ENCODE measurements at regions of chr12 and their contacts with region 1.

Region 1: DNA sequence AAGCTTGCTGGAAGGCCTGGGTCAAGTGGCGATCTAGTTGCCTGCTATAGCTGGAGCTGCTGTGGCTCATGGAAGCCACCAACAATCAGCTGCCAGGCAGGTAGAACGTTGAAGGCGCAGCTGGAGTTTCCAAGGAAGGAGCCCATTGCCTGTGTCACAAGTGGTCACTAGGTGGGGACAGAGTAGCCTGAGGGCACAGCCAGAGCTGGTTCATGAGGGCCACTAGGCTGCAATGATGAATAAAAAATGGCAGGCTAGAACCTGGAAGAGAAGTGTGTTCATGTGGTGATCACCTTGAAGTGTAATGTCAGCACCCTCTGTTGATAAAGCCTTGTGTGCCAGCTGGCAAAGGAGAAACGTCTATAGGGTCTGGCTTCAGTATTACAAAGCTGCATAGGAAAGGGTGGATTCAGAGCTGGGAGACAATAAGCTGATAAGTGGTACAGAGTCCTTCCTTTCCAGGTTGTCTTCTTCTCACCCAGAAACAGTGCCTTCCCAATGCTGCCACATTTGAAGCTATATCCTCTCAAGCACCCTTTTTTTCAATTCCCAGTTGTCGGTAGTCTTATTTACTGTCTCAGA is 165.8 kb downstream of the EMP1 start:
- DNase-seq: peak; percentile 68
- ATAC-seq: peak; percentile 67
- H3K4me3 ChIP-seq: no peak overlapping the region
- H3K4me3 Mint-ChIP-seq: no peak overlapping the region
- H3K27ac ChIP-seq: no peak overlapping the region
- H3K27ac Mint-ChIP-seq: no peak overlapping the region
- H3K4me1 ChIP-seq: no peaks in the 10 kb centered on the region
- H3K4me1 Mint-ChIP-seq: no peaks in the 10 kb centered on the region
- H3K27me3 ChIP-seq: peaks cover 0 to 7% (median 0%) of the 10 kb centered on the region in 4 experiments
- H3K27me3 Mint-ChIP-seq: peaks cover 12% of the 10 kb centered on the region
- CTCF ChIP-seq: peak; percentile 90

Region 2: DNA sequence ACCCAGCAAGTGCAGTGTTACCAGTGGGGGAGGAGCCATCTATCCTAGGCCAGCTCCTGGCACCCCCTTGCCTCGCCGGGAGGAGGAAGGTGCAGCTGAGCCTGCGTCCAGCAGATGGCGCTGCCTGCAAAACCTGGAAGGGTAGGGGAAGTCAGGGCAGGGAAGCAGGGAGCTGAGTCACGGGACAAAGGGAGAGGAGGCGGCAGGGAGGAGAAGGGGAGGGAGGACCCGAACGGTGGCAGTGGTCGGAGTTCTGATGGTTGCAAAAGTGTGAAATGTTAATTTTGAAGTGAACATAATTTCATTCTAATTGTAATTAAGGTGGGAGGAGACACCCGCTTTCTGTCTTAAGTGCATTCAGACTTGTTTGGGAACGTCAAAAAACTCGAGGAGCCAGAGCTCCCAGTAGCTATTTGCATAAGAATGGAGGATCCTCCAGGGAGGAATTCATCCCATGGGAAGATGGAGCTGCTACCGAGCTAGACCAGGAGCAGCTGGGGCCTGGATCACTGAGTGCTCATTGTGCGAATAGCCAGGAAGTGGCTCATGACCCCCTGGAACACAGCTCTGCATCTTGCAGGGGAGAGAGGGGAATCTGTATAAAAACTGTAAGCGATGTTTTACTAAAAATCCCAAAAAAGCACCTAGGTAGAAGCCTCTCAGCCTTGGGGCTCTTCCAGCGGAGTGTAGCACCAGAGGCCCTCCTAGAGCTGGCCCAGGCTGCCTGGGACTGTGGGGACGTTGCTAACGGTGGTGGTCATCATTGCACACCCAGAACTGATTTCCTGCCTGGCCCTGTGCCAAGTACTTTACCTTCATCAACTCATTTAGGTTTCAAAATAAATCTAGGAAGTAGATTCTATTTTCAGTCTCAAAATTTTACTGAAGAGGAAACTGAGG is 106.3 kb before region 1 on chr12:
- CTCF ChIA-PET with region 1: interaction called, 12 read pairs
- POLR2A ChIA-PET with region 1: no interaction called
- intact Hi-C with region 1: no loop called
- DNase-seq: peak; percentile 75
- ATAC-seq: peak; percentile 96
- H3K4me3 ChIP-seq: no peak overlapping the region
- H3K4me3 Mint-ChIP-seq: peak overlapping the region; percentile 33
- H3K27ac ChIP-seq: no peak overlapping the region
- H3K27ac Mint-ChIP-seq: no peak overlapping the region
- H3K4me1 ChIP-seq: peaks cover 3 to 4% of the 10 kb centered on the region in 2 donors
- H3K4me1 Mint-ChIP-seq: peaks cover 4% of the 10 kb centered on the region
- H3K27me3 ChIP-seq: peaks cover 0 to 3% (median 0%) of the 10 kb centered on the region in 4 experiments
- H3K27me3 Mint-ChIP-seq: peaks cover 14% of the 10 kb centered on the region
- CTCF ChIP-seq: peak; percentile 96

Region 3: GRCh38 chr12:13316587-13317246 is 45.6 kb before region 1 on chr12:
- CTCF ChIA-PET with region 1: no interaction called
- POLR2A ChIA-PET with region 1: no interaction called
- intact Hi-C with region 1: no loop called
- DNase-seq: no peak
- ATAC-seq: no peak
- H3K4me3 ChIP-seq: no peak overlapping the region
- H3K4me3 Mint-ChIP-seq: no peak overlapping the region
- H3K27ac ChIP-seq: no peak overlapping the region
- H3K27ac Mint-ChIP-seq: no peak overlapping the region
- H3K4me1 ChIP-seq: no peaks in the 10 kb centered on the region
- H3K4me1 Mint-ChIP-seq: no peaks in the 10 kb centered on the region
- H3K27me3 ChIP-seq: no peaks in the 10 kb centered on the region
- H3K27me3 Mint-ChIP-seq: peaks cover 20% of the 10 kb centered on the region
- CTCF ChIP-seq: no peak

Region 4: GRCh38 chr12:13373131-13373530 is 10.8 kb after region 1 on chr12:
- CTCF ChIA-PET with region 1: interaction called, 19 read pairs
- POLR2A ChIA-PET with region 1: no interaction called
- intact Hi-C with region 1: no loop called
- DNase-seq: no peak
- ATAC-seq: no peak
- H3K4me3 ChIP-seq: no peak overlapping the region
- H3K4me3 Mint-ChIP-seq: no peak overlapping the region
- H3K27ac ChIP-seq: no peak overlapping the region
- H3K27ac Mint-ChIP-seq: no peak overlapping the region
- H3K4me1 ChIP-seq: peaks cover 0 to 3% of the 10 kb centered on the region in 2 donors
- H3K4me1 Mint-ChIP-seq: peaks cover 4% of the 10 kb centered on the region
- H3K27me3 ChIP-seq: no peaks in the 10 kb centered on the region
- H3K27me3 Mint-ChIP-seq: peaks cover 3% of the 10 kb centered on the region
- CTCF ChIP-seq: no peak

Region 5: DNA sequence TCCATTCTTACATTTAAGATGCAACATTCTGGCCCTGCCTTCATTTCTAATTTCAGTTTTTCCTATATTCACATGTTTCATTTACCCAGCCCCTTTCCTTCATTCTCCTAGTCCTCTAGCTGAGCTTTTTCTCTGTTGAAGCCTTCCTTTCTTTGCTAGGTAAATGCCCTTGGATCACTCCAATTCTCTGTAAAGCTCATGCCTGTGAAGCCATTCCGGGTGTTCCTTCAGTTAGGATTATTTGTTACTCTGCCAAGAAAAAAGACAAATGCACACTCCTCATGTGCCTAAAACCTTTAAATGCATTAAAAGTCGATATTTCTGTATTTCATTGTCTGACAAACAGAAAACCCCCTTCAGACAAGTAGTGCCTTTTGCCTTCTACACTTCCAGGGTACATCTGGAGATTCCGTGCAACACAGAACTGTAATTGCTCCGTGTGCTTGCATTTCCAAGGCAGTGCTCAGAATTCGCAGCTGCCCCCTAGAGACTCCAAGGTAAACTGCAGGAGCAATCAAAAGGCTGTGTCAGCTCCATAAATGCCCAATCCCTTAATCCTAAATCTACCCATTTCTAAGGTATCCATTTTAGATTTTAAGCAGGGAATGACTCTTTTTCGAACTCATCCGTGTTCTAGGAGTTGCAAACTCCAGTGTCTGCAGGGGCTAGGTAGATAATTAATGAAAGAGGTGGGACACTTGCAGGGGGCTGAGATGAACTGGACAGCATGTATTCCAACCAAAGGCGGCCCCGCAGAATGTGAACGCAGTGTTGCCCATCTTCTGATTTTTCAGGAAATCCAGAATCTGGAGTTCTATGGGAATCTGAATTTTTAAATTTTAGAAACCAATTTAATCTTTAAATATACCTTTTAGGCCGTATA is 298.9 kb after region 1 on chr12:
- CTCF ChIA-PET with region 1: interaction called, 97 read pairs
- POLR2A ChIA-PET with region 1: no interaction called
- intact Hi-C with region 1: no loop called
- DNase-seq: peak; percentile 56
- ATAC-seq: peak; percentile 51
- H3K4me3 ChIP-seq: no peak overlapping the region
- H3K4me3 Mint-ChIP-seq: no peak overlapping the region
- H3K27ac ChIP-seq: no peak overlapping the region
- H3K27ac Mint-ChIP-seq: no peak overlapping the region
- H3K4me1 ChIP-seq: peaks cover 0 to 2% of the 10 kb centered on the region in 2 donors
- H3K4me1 Mint-ChIP-seq: no peaks in the 10 kb centered on the region
- H3K27me3 ChIP-seq: peaks cover 0 to 3% (median 0%) of the 10 kb centered on the region in 4 experiments
- H3K27me3 Mint-ChIP-seq: no peaks in the 10 kb centered on the region
- CTCF ChIP-seq: peak; percentile 89

Region 6: GRCh38 chr12:13666806-13667205 is 304.5 kb after region 1 on chr12:
- CTCF ChIA-PET with region 1: interaction called, 97 read pairs
- POLR2A ChIA-PET with region 1: no interaction called
- intact Hi-C with region 1: no loop called
- DNase-seq: no peak
- ATAC-seq: no peak
- H3K4me3 ChIP-seq: no peak overlapping the region
- H3K4me3 Mint-ChIP-seq: no peak overlapping the region
- H3K27ac ChIP-seq: no peak overlapping the region
- H3K27ac Mint-ChIP-seq: no peak overlapping the region
- H3K4me1 ChIP-seq: no peaks in the 10 kb centered on the region
- H3K4me1 Mint-ChIP-seq: no peaks in the 10 kb centered on the region
- H3K27me3 ChIP-seq: peaks cover 0 to 11% (median 1%) of the 10 kb centered on the region in 4 experiments
- H3K27me3 Mint-ChIP-seq: peaks cover 36% of the 10 kb centered on the region
- CTCF ChIP-seq: no peak

Region 7: GRCh38 chr12:13941258-13942249 is 579.2 kb after region 1 on chr12:
- CTCF ChIA-PET with region 1: interaction called, 10 read pairs
- POLR2A ChIA-PET with region 1: no interaction called
- intact Hi-C with region 1: loop called (anchors 5 kb)
- DNase-seq: peak; percentile 24
- ATAC-seq: no peak
- H3K4me3 ChIP-seq: no peak overlapping the region
- H3K4me3 Mint-ChIP-seq: no peak overlapping the region
- H3K27ac ChIP-seq: no peak overlapping the region
- H3K27ac Mint-ChIP-seq: no peak overlapping the region
- H3K4me1 ChIP-seq: peaks cover 0 to 3% of the 10 kb centered on the region in 2 donors
- H3K4me1 Mint-ChIP-seq: peaks cover 4% of the 10 kb centered on the region
- H3K27me3 ChIP-seq: peaks cover 0 to 13% (median 4%) of the 10 kb centered on the region in 4 experiments
- H3K27me3 Mint-ChIP-seq: peaks cover 33% of the 10 kb centered on the region
- CTCF ChIP-seq: no peak

Measured in B cell (primary cell).